Calu3 (cell line): ENCODE measurements at regions of chr2 and their contacts with region 1.

Region 1: DNA sequence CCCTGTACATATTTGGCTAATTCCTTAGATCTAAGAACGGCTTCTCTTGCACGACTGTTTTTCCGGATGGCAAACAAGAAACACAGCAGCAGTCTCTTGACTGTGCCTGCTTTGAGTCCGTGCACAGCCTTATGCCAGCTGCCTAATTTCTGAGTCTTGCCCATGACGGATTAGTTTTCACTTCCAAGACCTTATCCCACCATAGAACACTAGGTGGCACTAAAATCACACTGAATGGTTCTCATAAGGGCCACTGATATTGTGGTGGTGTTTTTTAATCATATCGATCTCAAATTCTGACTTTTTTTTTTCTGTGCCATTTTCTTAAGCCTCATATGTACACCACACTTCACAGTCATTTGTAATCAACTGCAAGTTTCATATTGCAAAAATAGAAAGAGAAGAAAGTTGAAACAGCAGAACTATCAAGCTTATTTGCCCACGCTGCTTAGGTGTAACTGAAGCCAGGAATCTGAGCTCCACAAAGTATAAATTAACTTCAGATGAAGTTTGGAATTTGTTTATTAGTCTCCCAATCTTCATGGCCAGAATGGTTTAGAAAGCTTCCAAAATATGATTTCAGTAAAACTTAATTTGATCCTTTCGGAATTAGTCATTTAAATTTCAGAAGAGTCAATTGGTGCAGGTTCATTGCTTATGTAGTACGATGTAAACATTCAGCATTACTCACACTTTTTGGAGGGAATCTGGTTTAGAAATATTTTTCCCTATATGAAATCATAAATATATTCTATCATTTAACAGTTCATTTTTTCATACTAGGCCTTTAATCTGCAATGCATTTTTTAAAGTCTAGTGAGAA is 45.5 kb upstream of the SCN7A start:
- DNase-seq: peak; percentile 61
- H3K4me3 Mint-ChIP-seq: no peak overlapping the region
- H3K27ac Mint-ChIP-seq: no peak overlapping the region
- H3K4me1 Mint-ChIP-seq: peaks cover 6% of the 10 kb centered on the region
- H3K27me3 Mint-ChIP-seq: no peaks in the 10 kb centered on the region
- CTCF ChIP-seq: peak; percentile 74

Region 2: GRCh38 chr2:166895243-166895642 is 355.7 kb after region 1 on chr2:
- CTCF ChIA-PET with region 1: no interaction called
- intact Hi-C with region 1: loop called (anchors 10 kb)
- DNase-seq: no peak
- H3K4me3 Mint-ChIP-seq: no peak overlapping the region
- H3K27ac Mint-ChIP-seq: no peak overlapping the region
- H3K4me1 Mint-ChIP-seq: no peaks in the 10 kb centered on the region
- H3K27me3 Mint-ChIP-seq: no peaks in the 10 kb centered on the region
- CTCF ChIP-seq: no peak

Region 3: GRCh38 chr2:167127135-167127534 is 587.6 kb after region 1 on chr2:
- CTCF ChIA-PET with region 1: no interaction called
- intact Hi-C with region 1: loop called (anchors 2 kb)
- DNase-seq: no peak
- H3K4me3 Mint-ChIP-seq: no peak overlapping the region
- H3K27ac Mint-ChIP-seq: no peak overlapping the region
- H3K4me1 Mint-ChIP-seq: peaks cover 8% of the 10 kb centered on the region
- H3K27me3 Mint-ChIP-seq: no peaks in the 10 kb centered on the region
- CTCF ChIP-seq: peak; percentile 53

Region 4: GRCh38 chr2:167196461-167197252 is 657.1 kb after region 1 on chr2:
- CTCF ChIA-PET with region 1: no interaction called
- intact Hi-C with region 1: loop called (anchors 5 kb)
- DNase-seq: peak; percentile 32
- H3K4me3 Mint-ChIP-seq: peak overlapping the region; percentile 50
- H3K27ac Mint-ChIP-seq: no peak overlapping the region
- H3K4me1 Mint-ChIP-seq: peaks cover 55% of the 10 kb centered on the region
- H3K27me3 Mint-ChIP-seq: no peaks in the 10 kb centered on the region
- CTCF ChIP-seq: no peak

Region 5: DNA sequence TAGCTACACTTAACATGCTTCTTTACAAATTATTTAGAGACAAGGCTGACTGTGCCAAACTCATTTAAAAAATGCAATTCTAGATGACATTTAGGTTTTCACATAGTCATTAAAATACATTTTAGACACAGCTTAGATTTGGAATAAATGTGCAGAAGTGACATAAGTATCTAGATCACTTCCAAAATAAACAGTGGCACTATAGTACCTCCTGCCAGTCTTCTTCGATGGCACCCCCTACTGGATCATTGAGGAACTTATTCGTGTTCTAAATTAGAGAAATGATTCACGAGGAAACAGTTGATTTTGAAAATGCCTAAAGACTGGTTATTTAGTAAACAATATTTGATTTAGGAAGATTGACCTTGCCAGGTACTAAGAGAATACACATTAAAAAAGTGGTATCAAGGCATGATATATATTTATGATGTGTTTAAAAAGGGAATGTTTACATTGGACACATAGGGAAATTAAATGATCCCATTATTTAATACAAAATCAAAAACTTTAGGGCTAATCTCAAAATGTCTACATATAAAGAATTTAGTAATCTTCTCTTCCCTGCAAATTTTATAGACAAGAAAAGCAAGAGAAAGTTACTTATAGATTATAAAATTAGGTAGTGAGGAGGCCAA is 672.6 kb after region 1 on chr2:
- CTCF ChIA-PET with region 1: interaction called, 3 read pairs
- intact Hi-C with region 1: loop called (anchors 1 kb)
- DNase-seq: peak; percentile 71
- H3K4me3 Mint-ChIP-seq: no peak overlapping the region
- H3K27ac Mint-ChIP-seq: no peak overlapping the region
- H3K4me1 Mint-ChIP-seq: no peaks in the 10 kb centered on the region
- H3K27me3 Mint-ChIP-seq: no peaks in the 10 kb centered on the region
- CTCF ChIP-seq: peak; percentile 60

Region 6: DNA sequence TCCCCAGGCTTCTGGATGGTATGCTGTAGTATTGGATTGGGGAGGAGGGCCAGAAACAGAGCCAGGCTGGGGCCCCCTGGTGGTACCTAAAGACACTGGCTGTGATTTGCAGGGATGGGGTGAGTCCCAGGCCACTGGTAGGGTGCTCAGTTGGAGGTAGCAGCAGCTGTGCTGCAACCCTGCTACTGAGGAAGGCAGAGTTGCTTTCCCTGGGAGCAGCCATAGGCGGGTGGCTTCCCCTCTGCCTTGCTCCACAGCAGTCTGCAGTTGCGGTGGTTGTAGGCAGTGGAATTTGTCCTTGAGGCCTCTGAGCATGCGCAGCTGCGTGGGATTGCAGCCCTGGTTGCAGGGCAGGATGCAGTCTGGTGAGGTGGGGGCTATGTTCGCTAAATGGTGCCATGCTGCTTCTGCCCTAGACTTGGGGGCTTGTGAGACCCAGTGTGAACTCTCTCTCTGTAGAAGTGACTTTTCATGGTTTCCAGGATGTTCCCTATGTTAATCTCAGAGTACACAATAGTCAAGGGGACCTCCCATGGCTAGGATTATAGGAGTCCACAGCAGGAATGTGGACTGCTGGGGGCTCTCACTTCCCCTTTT is 792.2 kb after region 1 on chr2:
- CTCF ChIA-PET with region 1: no interaction called
- intact Hi-C with region 1: loop called (anchors 1 kb)
- DNase-seq: peak; percentile 27
- H3K4me3 Mint-ChIP-seq: no peak overlapping the region
- H3K27ac Mint-ChIP-seq: no peak overlapping the region
- H3K4me1 Mint-ChIP-seq: no peaks in the 10 kb centered on the region
- H3K27me3 Mint-ChIP-seq: no peaks in the 10 kb centered on the region
- CTCF ChIP-seq: peak; percentile 24

Region 7: DNA sequence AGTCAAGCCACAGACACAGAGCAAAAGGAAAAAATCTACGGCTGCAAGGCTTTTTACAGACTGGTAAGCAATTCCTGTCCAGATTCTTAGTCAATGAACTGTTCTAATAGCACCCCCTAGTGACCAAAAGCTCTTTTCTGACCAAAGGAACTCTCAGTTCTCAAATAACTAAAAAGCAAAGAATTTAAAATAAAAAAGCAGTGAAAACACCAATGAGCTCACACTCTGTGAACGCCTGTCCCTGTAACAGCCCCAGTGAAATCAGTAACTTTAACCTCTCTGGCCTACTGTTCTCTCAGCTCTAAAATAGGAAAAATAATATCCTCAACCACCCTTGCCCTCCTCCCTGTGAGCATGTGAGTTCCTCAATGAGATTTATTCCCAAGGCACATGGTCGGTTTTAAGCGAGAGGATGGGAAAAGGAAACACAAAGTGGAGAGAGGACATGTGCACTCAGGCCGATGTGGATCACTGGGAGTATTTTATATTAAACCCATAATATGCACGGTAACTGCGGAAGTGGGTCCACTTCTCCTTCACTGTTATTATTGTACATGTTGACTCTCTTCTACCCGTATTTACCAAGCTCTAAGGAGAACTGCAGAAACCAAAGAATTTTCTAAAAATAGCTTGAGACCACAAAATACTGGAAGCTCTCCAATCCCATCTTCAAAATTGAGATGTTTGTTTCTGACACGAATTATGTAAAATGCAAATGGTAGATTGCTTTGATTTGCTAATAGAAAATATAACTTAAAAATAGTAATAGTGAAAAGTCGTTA is 1579.4 kb after region 1 on chr2:
- CTCF ChIA-PET with region 1: no interaction called
- intact Hi-C with region 1: loop called (anchors 2 kb)
- DNase-seq: peak; percentile 41
- H3K4me3 Mint-ChIP-seq: no peak overlapping the region
- H3K27ac Mint-ChIP-seq: no peak overlapping the region
- H3K4me1 Mint-ChIP-seq: no peaks in the 10 kb centered on the region
- H3K27me3 Mint-ChIP-seq: no peaks in the 10 kb centered on the region
- CTCF ChIP-seq: peak; percentile 49